Naive thymus-derived CD4-positive, alpha-beta T cell (primary cell): ENCODE measurements at regions of chr20 and their contacts with region 1.

Region 1: GRCh38 chr20:18793625-18794427 is 19.8 kb upstream of the SCP2D1 start:
- DNase-seq: peak; percentile 62 to 94 (median 87)
- ATAC-seq: peak; percentile 99
- H3K4me3 ChIP-seq: peak overlapping the region; percentile 87
- H3K4me3 Mint-ChIP-seq: peak overlapping the region; percentile 85 to 99 (median 96)
- H3K27ac ChIP-seq: peak overlapping the region; percentile 92
- H3K27ac Mint-ChIP-seq: peak overlapping the region; percentile 97 to 100 (median 99)
- H3K4me1 ChIP-seq: peaks cover 8% of the 10 kb centered on the region in 2 donors
- H3K4me1 Mint-ChIP-seq: peaks cover 0 to 24% (median 18%) of the 10 kb centered on the region in 7 donors
- H3K27me3 ChIP-seq: no peaks in the 10 kb centered on the region
- H3K27me3 Mint-ChIP-seq: peaks cover 11 to 26% (median 21%) of the 10 kb centered on the region in 5 donors

Region 2: GRCh38 chr20:18137412-18138265 is 656.2 kb before region 1 on chr20 and contains the starts of genes KAT14 and PET117:
- CTCF ChIA-PET with region 1: interaction called, 4 read pairs
- POLR2A ChIA-PET with region 1: interaction called, 3 read pairs
- intact Hi-C with region 1: loop called (anchors 1 to 10 kb)
- DNase-seq: peak; percentile 85 to 96 (median 93)
- ATAC-seq: peak; percentile 98
- H3K4me3 ChIP-seq: peak within 1 kb of the TSS; percentile 99
- H3K4me3 Mint-ChIP-seq: peak within 1 kb of the TSS; percentile 76 to 92 (median 88)
- H3K27ac ChIP-seq: peak within 1 kb of the TSS; percentile 89
- H3K27ac Mint-ChIP-seq: peak within 1 kb of the TSS; percentile 85 to 95 (median 92)
- H3K4me1 ChIP-seq: peaks cover 13 to 15% of the 10 kb centered on the region in 2 donors
- H3K4me1 Mint-ChIP-seq: peaks cover 23 to 44% (median 31%) of the 10 kb centered on the region in 7 donors
- H3K27me3 ChIP-seq: no peaks in the 10 kb centered on the region
- H3K27me3 Mint-ChIP-seq: peaks cover 0 to 7% (median 0%) of the 10 kb centered on the region in 5 donors
- total RNA-seq, gene KAT14: 12.3 to 26.7 (median 16.2) TPM
- total RNA-seq, gene PET117: 9.0 to 20.3 (median 11.7) TPM

Region 3: GRCh38 chr20:18466894-18467730 is 326.7 kb before region 1 on chr20 and contains the starts of genes DZANK1 and POLR3F:
- CTCF ChIA-PET with region 1: no interaction called
- POLR2A ChIA-PET with region 1: interaction called, 4 read pairs
- intact Hi-C with region 1: loop called (anchors 1 kb)
- DNase-seq: peak; percentile 85 to 93 (median 92)
- ATAC-seq: peak; percentile 97
- H3K4me3 ChIP-seq: peak within 1 kb of the TSS; percentile 93
- H3K4me3 Mint-ChIP-seq: peak within 1 kb of the TSS; percentile 89 to 99 (median 97)
- H3K27ac ChIP-seq: peak within 1 kb of the TSS; percentile 77
- H3K27ac Mint-ChIP-seq: peak within 1 kb of the TSS; percentile 93 to 99 (median 98)
- H3K4me1 ChIP-seq: peaks cover 7 to 14% of the 10 kb centered on the region in 2 donors
- H3K4me1 Mint-ChIP-seq: peaks cover 25 to 44% (median 37%) of the 10 kb centered on the region in 7 donors
- H3K27me3 ChIP-seq: no peaks in the 10 kb centered on the region
- H3K27me3 Mint-ChIP-seq: no peaks in the 10 kb centered on the region
- total RNA-seq, gene DZANK1: 1.2 to 3.5 (median 2.9) TPM
- total RNA-seq, gene POLR3F: 5.0 to 13.5 (median 11.5) TPM

Region 4: GRCh38 chr20:18587665-18588573 is 205.9 kb before region 1 on chr20 and contains the start of gene DTD1:
- CTCF ChIA-PET with region 1: no interaction called
- POLR2A ChIA-PET with region 1: no interaction called
- intact Hi-C with region 1: loop called (anchors 1 kb)
- DNase-seq: peak; percentile 29 to 93 (median 53)
- ATAC-seq: peak; percentile 92
- H3K4me3 ChIP-seq: peak within 1 kb of the TSS; percentile 68
- H3K4me3 Mint-ChIP-seq: peak within 1 kb of the TSS; percentile 83 to 99 (median 91)
- H3K27ac ChIP-seq: peak within 1 kb of the TSS; percentile 74
- H3K27ac Mint-ChIP-seq: peak within 1 kb of the TSS; percentile 80 to 94 (median 91)
- H3K4me1 ChIP-seq: peaks cover 0 to 4% of the 10 kb centered on the region in 2 donors
- H3K4me1 Mint-ChIP-seq: peaks cover 16 to 39% (median 27%) of the 10 kb centered on the region in 7 donors
- H3K27me3 ChIP-seq: no peaks in the 10 kb centered on the region
- H3K27me3 Mint-ChIP-seq: peaks cover 0 to 11% (median 9%) of the 10 kb centered on the region in 5 donors
- total RNA-seq, gene DTD1: 12.7 to 24.4 (median 16.6) TPM

Region 5: DNA sequence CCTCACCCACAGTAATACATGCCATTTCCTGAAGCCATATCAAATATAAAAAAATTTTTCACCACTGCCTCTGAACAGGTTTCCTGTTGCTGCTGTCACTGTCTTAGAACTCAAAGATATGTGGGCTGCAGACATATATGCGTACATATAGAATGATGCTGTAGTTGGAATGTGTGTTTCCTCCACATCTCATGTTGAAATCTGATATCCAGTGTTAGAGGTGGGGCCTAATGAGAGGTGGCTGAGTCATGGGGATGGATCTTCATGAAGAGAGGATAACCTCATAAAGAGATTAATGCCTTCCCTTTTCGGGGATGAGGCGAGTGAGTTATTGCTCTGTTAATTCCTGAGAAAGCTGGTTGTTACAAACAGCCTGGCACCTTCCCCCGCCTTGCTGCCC is 12.1 kb after region 1 on chr20:
- CTCF ChIA-PET with region 1: no interaction called
- POLR2A ChIA-PET with region 1: interaction called, 9 read pairs
- intact Hi-C with region 1: loop called in 1 of 2 experiments (anchors 1 kb)
- DNase-seq: peak in 7 of 9 donors; percentile 24 to 66 (median 48)
- ATAC-seq: peak; percentile 83
- H3K4me3 ChIP-seq: no peak overlapping the region
- H3K4me3 Mint-ChIP-seq: peak overlapping the region in 6 of 10 donors; percentile 1 to 50 (median 28)
- H3K27ac ChIP-seq: peak overlapping the region; percentile 9
- H3K27ac Mint-ChIP-seq: peak overlapping the region in 8 of 9 donors; percentile 74 to 91 (median 87)
- H3K4me1 ChIP-seq: peaks cover 0 to 16% of the 10 kb centered on the region in 2 donors
- H3K4me1 Mint-ChIP-seq: peaks cover 0 to 25% (median 22%) of the 10 kb centered on the region in 7 donors
- H3K27me3 ChIP-seq: no peaks in the 10 kb centered on the region
- H3K27me3 Mint-ChIP-seq: peaks cover 0 to 9% (median 4%) of the 10 kb centered on the region in 5 donors

Region 6: DNA sequence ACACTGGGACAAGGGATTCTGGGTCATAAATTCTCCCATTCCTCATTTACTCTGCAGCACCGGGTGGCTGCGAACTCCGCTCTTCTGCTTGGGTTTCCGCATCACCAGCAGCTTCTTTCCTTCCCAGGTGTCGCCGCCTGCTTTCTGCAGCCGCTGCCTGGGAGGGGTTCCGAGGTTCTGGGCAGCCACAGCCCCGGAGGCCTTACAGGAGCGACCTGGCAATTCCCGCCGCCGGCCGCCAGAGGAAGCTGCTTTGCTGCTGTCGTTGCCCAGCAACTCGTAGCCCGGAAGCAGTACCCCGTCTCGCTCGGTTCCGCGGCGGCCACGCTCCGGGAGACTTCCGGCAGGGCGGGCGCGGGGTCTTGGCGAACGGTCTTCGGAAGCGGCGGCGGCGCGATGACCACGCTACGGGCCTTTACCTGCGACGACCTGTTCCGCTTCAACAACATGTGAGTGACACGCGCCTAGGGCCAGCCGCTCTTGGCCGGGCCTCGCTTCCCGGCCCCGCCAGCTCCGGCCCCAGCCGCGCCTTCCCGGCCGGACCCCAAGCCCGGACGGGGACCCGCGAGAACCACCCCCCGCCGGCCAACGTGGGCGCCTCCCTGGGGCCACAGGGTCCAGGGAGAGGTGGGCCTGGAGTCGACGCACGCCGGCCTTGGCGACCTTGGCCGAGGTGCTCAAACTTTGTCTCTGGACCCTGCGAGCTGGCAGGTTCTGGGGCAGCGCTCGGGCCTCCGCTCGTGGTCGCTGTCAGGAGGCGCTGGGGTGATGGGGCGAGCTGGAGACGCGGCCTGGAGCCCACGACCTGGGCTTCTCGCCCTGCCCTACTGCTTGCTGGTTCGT is 1223.4 kb after region 1 on chr20 and contains the start of gene NAA20:
- CTCF ChIA-PET with region 1: no interaction called
- POLR2A ChIA-PET with region 1: interaction called, 5 read pairs
- intact Hi-C with region 1: loop called in 1 of 2 experiments (anchors 5 kb)
- DNase-seq: peak; percentile 80 to 89 (median 87)
- ATAC-seq: peak; percentile 99
- H3K4me3 ChIP-seq: peak within 1 kb of the TSS; percentile 77
- H3K4me3 Mint-ChIP-seq: peak within 1 kb of the TSS; percentile 88 to 96 (median 93)
- H3K27ac ChIP-seq: peak within 1 kb of the TSS; percentile 83
- H3K27ac Mint-ChIP-seq: peak within 1 kb of the TSS; percentile 90 to 96 (median 94)
- H3K4me1 ChIP-seq: peaks cover 9 to 28% of the 10 kb centered on the region in 2 donors
- H3K4me1 Mint-ChIP-seq: peaks cover 38 to 68% (median 63%) of the 10 kb centered on the region in 7 donors
- H3K27me3 ChIP-seq: no peaks in the 10 kb centered on the region
- H3K27me3 Mint-ChIP-seq: no peaks in the 10 kb centered on the region
- total RNA-seq, gene NAA20: 21.5 to 52.6 (median 28.3) TPM